ENCODE measurements at regions of chr16 and their contacts with region 1.

Region 1: GRCh38 chr16:29700253-29700987 is 21.4 kb downstream of the QPRT start:
- DNase-seq: peak; percentile 92 to 96
- ATAC-seq: peak; percentile 93 to 94
- H3K4me3 ChIP-seq: no peak overlapping the region
- H3K27ac ChIP-seq: peak overlapping the region; percentile 34 to 55; a peak in 5 of 6 replicates
- H3K4me1 ChIP-seq: peaks cover 4% of the 10 kb centered on the region; the same call in 1 of the 3 replicates
- CTCF ChIP-seq: peak; percentile 96
- EP300 ChIP-seq: no peak
- POLR2A ChIP-seq: no peak
- RAD21 ChIP-seq: peak; percentile 94 to 95

Region 2: DNA sequence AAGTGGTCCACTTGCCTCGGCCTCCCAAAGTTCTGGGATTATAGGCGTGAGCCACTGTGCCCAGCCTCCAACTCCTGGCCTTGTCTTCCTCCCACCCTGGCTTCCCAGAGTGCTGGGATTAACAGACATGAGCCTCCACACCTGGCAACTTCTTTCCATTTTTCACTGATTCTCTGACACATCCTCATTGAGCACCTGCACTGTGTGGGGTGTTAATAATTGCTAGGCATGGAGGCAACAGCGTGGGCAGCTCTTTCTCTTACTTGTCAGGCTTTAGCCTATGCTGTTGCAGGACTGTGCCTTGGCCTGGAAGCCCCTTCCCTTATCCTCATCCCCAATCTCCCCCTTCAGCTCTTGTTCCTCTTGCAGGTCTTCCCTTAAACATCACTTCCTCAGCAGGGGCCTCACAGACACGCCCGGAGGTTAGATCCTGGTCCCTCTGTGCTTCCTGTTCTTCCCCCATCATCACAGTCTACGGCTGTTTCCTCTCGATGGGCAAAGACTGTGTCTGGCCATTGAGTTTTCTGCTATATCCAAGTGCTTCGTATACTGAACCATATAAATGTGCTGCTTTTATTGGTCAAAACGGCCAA is 13.6 kb before region 1 on chr16:
- CTCF ChIA-PET with region 1: interaction called, 81 read pairs
- POLR2A ChIA-PET with region 1: no interaction called
- DNase-seq: no peak
- ATAC-seq: no peak
- H3K4me3 ChIP-seq: no peak overlapping the region
- H3K27ac ChIP-seq: no peak overlapping the region
- H3K4me1 ChIP-seq: peaks cover 4% of the 10 kb centered on the region; the same call in 1 of the 3 replicates
- CTCF ChIP-seq: no peak
- EP300 ChIP-seq: no peak
- POLR2A ChIP-seq: no peak
- RAD21 ChIP-seq: no peak

Region 3: GRCh38 chr16:29720699-29721098 is 20.3 kb after region 1 on chr16:
- CTCF ChIA-PET with region 1: interaction called, 84 read pairs
- POLR2A ChIA-PET with region 1: no interaction called
- DNase-seq: no peak
- ATAC-seq: no peak
- H3K4me3 ChIP-seq: no peak overlapping the region
- H3K27ac ChIP-seq: no peak overlapping the region
- H3K4me1 ChIP-seq: no peaks in the 10 kb centered on the region
- CTCF ChIP-seq: no peak
- EP300 ChIP-seq: no peak
- POLR2A ChIP-seq: no peak
- RAD21 ChIP-seq: no peak

Region 4: GRCh38 chr16:29790183-29790952 is 89.9 kb after region 1 on chr16 and contains the start of gene KIF22:
- CTCF ChIA-PET with region 1: interaction called, 12 read pairs
- POLR2A ChIA-PET with region 1: interaction called, 11 read pairs
- DNase-seq: peak; percentile 99
- ATAC-seq: peak; percentile 97 to 98
- H3K4me3 ChIP-seq: peak within 1 kb of the TSS; percentile 94
- H3K27ac ChIP-seq: peak within 1 kb of the TSS; percentile 94 to 96
- H3K4me1 ChIP-seq: peaks cover 20% of the 10 kb centered on the region
- CTCF ChIP-seq: peak; percentile 60
- EP300 ChIP-seq: no peak
- POLR2A ChIP-seq: peak; percentile 51; the same call in 1 of the 2 replicates
- RAD21 ChIP-seq: peak in 1 of 2 experiments; percentile 44; a peak in 2 of 5 replicates
- polyA plus RNA-seq, gene KIF22: 64.3 and 85.9 TPM in 2 replicates

Region 5: GRCh38 chr16:30024451-30024850 is 324.0 kb after region 1 on chr16:
- CTCF ChIA-PET with region 1: interaction called, 12 read pairs
- POLR2A ChIA-PET with region 1: no interaction called
- DNase-seq: no peak
- ATAC-seq: no peak
- H3K4me3 ChIP-seq: no peak overlapping the region
- H3K27ac ChIP-seq: no peak overlapping the region
- H3K4me1 ChIP-seq: no peaks in the 10 kb centered on the region
- CTCF ChIP-seq: no peak
- EP300 ChIP-seq: no peak
- POLR2A ChIP-seq: no peak
- RAD21 ChIP-seq: no peak

Region 6: DNA sequence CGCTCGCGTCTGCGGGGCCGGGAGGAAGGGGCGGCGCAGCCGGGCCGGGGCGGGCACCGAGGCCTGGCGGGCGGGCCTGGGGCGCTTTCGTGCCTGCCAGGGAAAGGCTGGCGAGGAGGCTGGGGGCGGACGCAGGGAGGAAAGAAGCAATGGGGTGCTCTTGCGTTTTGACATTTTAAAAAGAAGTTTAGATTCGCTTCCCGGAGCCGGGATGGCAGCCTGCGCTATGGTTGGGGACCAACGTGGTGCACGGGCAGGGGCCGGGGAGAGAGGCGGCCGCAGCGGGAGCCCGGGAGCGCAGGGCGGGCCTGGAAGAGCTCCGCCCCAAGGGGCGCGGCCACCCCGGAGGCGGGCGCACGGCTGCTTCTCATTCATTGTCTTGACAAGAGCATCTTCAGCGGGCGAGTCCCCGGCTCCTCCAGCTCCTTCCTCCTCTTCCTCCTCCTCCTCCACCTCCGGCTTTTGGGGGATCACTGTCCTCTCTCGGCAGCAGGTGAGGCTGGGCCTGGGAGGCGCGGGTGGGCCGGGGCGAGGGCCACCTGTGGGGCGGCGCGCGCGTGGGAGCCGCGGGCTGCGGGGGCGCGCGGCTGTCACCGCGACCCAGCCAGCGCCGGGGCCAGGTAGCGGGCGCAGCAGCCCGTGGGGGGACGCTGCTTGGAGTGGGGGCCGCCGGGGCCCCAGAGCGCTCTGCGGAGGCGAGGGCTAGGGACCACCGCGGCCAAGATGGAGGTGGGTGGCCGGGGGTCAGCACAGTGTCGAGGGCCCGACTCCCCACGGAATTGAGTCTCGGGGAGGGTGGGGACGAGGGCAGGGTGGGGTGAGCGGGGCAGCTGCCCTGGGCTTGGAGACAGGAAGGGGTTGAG is 483.0 kb after region 1 on chr16 and contains the start of gene CORO1A:
- CTCF ChIA-PET with region 1: no interaction called
- POLR2A ChIA-PET with region 1: no interaction called
- DNase-seq: peak; percentile 67 to 85
- ATAC-seq: peak; percentile 84 to 88
- H3K4me3 ChIP-seq: peak within 1 kb of the TSS; percentile 55
- H3K27ac ChIP-seq: peak within 1 kb of the TSS; percentile 70 to 93
- H3K4me1 ChIP-seq: peaks cover 21% of the 10 kb centered on the region; the same call in 2 of the 3 replicates
- CTCF ChIP-seq: no peak
- EP300 ChIP-seq: no peak
- POLR2A ChIP-seq: peak; percentile 52
- RAD21 ChIP-seq: no peak
- polyA plus RNA-seq, gene CORO1A: 0.82 and 0.83 TPM in 2 replicates

Measured in A549 (cell line).